Psoas muscle (tissue), 8 donors: ENCODE measurements at regions of chr14 and their contacts with region 1.

Region 1: GRCh38 chr14:21103710-21104447 is 3.0 kb downstream of the TMEM253 start:
- DNase-seq: peak; percentile 96 to 98
- ATAC-seq: peak; percentile 93 to 97 (median 96)
- H3K4me3 ChIP-seq: peak overlapping the region; percentile 94
- H3K27ac ChIP-seq: peak overlapping the region; percentile 100
- H3K4me1 ChIP-seq: peaks cover 38% of the 10 kb centered on the region
- H3K27me3 ChIP-seq: no peaks in the 10 kb centered on the region
- CTCF ChIP-seq: peak; percentile 77

Region 2: GRCh38 chr14:20461274-20462001 is 642.4 kb before region 1 on chr14 and contains the start of gene PIP4P1:
- intact Hi-C with region 1: loop called in 1 of 2 experiments (anchors 5 kb)
- DNase-seq: peak; percentile 99
- ATAC-seq: peak; percentile 95 to 96 (median 96)
- H3K4me3 ChIP-seq: peak within 1 kb of the TSS; percentile 87
- H3K27ac ChIP-seq: peak within 1 kb of the TSS; percentile 95
- H3K4me1 ChIP-seq: peaks cover 16% of the 10 kb centered on the region
- H3K27me3 ChIP-seq: no peaks in the 10 kb centered on the region
- CTCF ChIP-seq: no peak
- total RNA-seq, gene PIP4P1: 15.6 to 29.7 (median 20.7) TPM

Region 3: DNA sequence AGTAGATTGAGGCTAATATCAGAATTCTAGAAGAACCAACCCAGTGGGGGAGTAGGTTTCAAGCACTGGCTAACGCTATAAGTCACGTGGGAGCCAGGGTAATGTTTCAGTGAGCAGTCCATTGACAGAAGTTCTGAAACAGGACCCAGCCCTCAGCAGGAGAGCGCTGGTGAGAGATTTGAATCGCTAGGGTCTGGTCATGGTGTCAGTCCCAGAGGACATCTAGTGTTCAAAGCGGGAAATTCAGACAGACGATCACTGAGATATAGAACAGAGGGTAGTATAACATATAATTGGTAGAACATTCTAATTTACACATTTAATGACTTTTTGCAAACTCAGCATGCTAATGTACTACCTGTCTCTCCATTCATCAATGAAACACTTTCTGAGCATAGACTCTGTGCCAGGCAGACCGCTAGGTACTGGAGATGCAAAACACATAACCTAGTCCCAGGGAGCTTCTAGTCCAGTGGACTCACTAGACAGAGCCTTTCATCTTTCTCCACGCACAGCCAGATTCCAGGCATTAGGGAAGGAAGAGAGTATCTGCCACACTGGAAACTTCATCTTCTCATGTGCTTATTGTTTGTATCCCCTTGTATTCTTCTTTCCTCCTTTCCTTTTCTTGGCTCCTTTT is 248.1 kb before region 1 on chr14:
- intact Hi-C with region 1: loop called (anchors 5 kb)
- DNase-seq: peak in 1 of 2 donors; percentile 24
- ATAC-seq: peak; percentile 74 to 88 (median 80)
- H3K4me3 ChIP-seq: no peak overlapping the region
- H3K27ac ChIP-seq: no peak overlapping the region
- H3K4me1 ChIP-seq: no peaks in the 10 kb centered on the region
- H3K27me3 ChIP-seq: peaks cover 0 to 7% (median 0%) of the 10 kb centered on the region in 3 donors
- CTCF ChIP-seq: peak; percentile 67

Region 4: DNA sequence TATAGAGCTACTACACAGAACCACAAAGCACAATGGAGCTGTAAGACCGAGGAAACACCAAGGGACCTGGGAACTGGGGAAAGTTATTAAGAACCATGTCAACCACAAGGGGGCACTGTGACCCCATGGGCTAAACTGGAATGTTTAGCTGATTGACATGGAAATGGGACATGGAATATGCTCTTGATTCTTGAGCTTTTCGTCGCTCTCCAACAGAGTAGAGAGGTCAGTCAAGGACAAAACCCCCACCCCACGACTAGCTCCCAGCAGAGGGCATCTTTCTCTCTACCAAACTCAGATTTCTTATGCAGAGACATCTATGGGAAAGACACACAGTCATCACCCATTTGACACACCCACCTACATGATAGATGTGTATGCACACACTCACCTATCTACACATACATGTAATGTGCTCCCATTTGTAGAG is 89.1 kb before region 1 on chr14:
- intact Hi-C with region 1: loop called in 1 of 2 experiments (anchors 2 kb)
- DNase-seq: peak; percentile 81 to 90
- ATAC-seq: peak; percentile 74 to 86 (median 82)
- H3K4me3 ChIP-seq: peak overlapping the region; percentile 23
- H3K27ac ChIP-seq: peak overlapping the region; percentile 63
- H3K4me1 ChIP-seq: peaks cover 54% of the 10 kb centered on the region
- H3K27me3 ChIP-seq: no peaks in the 10 kb centered on the region
- CTCF ChIP-seq: peak; percentile 99

Region 5: GRCh38 chr14:21071225-21072030 is 32.5 kb before region 1 on chr14:
- intact Hi-C with region 1: loop called (anchors 1 to 5 kb)
- DNase-seq: peak; percentile 88 to 90
- ATAC-seq: peak; percentile 60 to 77 (median 62)
- H3K4me3 ChIP-seq: peak overlapping the region; percentile 83
- H3K27ac ChIP-seq: peak overlapping the region; percentile 84
- H3K4me1 ChIP-seq: peaks cover 18% of the 10 kb centered on the region
- H3K27me3 ChIP-seq: no peaks in the 10 kb centered on the region
- CTCF ChIP-seq: peak; percentile 6